Left lung (tissue), 14 donors: ENCODE measurements at regions of chr5 and their contacts with region 1.

Region 1: DNA sequence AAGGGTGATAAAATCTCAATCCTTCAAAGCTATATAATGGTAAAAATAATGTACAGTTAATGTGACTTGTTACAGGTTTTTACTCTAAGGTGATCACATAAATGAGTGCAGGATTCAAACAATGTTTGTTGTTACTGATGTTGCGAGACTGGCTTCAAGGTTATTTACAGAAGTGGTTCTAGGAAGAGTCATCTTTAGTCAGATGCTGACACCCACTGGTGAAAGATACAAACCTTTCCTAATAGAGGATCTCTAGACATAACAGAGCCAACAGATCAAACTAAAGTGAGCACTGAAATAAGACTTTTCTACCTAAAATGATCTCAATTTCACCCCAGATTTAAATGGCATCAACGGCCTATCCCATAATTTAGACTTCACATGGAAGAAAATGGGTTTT is 20.2 kb downstream of the ARSB start:
- DNase-seq: peak in 1 of 4 donors; percentile 71
- ATAC-seq: peak; percentile 73
- H3K4me3 ChIP-seq: no peak overlapping the region
- H3K27ac ChIP-seq: no peak overlapping the region
- H3K4me1 ChIP-seq: no peaks in the 10 kb centered on the region
- H3K27me3 ChIP-seq: no peaks in the 10 kb centered on the region
- CTCF ChIP-seq: peak; percentile 10 to 28

Region 2: GRCh38 chr5:78320401-78320800 is 644.5 kb before region 1 on chr5:
- intact Hi-C with region 1: loop called in 1 of 2 experiments (anchors 10 kb)
- DNase-seq: peak in 1 of 4 donors; percentile 39
- ATAC-seq: peak; percentile 50
- H3K4me3 ChIP-seq: no peak overlapping the region
- H3K27ac ChIP-seq: no peak overlapping the region
- H3K4me1 ChIP-seq: no peaks in the 10 kb centered on the region
- H3K27me3 ChIP-seq: no peaks in the 10 kb centered on the region
- CTCF ChIP-seq: peak; percentile 25 to 31

Region 3: DNA sequence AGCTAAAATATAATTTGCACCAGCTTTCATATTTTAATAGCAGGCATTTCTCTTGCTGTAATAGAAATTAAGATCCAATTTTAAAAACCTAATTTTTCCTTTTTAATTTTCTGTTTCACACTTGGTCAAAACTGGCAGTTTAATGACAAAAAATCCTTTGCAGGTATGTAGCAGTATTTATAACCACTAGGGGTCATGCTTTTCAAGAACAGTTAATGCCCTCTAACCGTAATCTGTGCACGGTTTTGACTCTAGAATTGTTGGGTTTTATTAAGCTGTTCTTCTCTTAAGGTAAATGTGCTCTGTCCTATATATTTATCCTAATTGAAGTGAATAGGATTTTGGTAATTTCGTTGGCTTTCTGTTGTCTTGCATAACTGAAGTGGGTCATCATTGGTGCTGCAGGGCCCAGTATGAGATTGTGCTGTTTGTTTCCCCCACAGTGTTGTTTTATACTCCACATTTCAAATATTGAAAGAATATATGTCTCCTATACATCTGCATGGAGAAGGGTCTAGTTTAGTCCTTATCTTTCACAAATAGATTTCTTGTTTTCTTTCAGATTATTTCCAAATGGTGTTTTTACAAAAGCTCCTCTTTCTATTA is 497.0 kb before region 1 on chr5:
- intact Hi-C with region 1: loop called in 1 of 2 experiments (anchors 10 kb)
- DNase-seq: peak in 2 of 4 donors; percentile 11 to 38
- ATAC-seq: peak; percentile 83
- H3K4me3 ChIP-seq: no peak overlapping the region
- H3K27ac ChIP-seq: no peak overlapping the region
- H3K4me1 ChIP-seq: peaks cover 0 to 6% of the 10 kb centered on the region in 2 donors
- H3K27me3 ChIP-seq: no peaks in the 10 kb centered on the region
- CTCF ChIP-seq: peak; percentile 77 to 78

Region 4: DNA sequence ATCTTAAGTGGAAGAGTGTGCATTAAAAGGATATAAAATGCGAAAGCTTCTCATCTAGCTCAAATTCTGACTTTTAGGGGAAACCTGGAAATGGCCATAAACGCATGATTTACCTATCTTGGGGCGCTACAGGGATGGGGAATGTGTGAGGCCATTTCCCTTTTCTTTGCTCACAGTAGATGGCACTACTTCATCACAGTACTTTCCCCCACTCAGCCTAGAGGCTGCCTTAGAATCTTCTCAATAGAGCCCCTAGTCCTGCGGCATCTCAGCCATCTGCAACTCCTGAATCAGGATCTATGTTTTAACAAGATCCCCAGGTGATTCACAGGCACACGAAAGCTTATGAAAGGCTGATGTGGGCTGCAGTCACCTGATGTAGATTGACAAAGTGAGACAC is 427.1 kb before region 1 on chr5:
- intact Hi-C with region 1: loop called in 1 of 2 experiments (anchors 10 kb)
- DNase-seq: peak in 2 of 4 donors; percentile 47 to 70
- ATAC-seq: peak; percentile 70
- H3K4me3 ChIP-seq: no peak overlapping the region
- H3K27ac ChIP-seq: no peak overlapping the region
- H3K4me1 ChIP-seq: peaks cover 0 to 62% of the 10 kb centered on the region in 2 donors
- H3K27me3 ChIP-seq: no peaks in the 10 kb centered on the region
- CTCF ChIP-seq: peak; percentile 33 to 47